HAP-1 (cell line): ENCODE measurements at regions of chr1 and their contacts with region 1.

Region 1: GRCh38 chr1:26602378-26602959 is 72.9 kb downstream of the RPS6KA1 start:
- DNase-seq: peak; percentile 69
- H3K4me3 ChIP-seq: no peak overlapping the region
- H3K4me1 ChIP-seq: peaks cover 7% of the 10 kb centered on the region; the same call in 1 of the 2 replicates
- H3K27me3 ChIP-seq: no peaks in the 10 kb centered on the region

Region 2: GRCh38 chr1:26429721-26430120 is 172.7 kb before region 1 on chr1:
- in situ Hi-C with region 1: no loop called
- DNase-seq: peak; percentile 80 to 90
- H3K4me3 ChIP-seq: no peak overlapping the region
- H3K4me1 ChIP-seq: peaks cover 22% of the 10 kb centered on the region
- H3K27me3 ChIP-seq: no peaks in the 10 kb centered on the region

Region 3: DNA sequence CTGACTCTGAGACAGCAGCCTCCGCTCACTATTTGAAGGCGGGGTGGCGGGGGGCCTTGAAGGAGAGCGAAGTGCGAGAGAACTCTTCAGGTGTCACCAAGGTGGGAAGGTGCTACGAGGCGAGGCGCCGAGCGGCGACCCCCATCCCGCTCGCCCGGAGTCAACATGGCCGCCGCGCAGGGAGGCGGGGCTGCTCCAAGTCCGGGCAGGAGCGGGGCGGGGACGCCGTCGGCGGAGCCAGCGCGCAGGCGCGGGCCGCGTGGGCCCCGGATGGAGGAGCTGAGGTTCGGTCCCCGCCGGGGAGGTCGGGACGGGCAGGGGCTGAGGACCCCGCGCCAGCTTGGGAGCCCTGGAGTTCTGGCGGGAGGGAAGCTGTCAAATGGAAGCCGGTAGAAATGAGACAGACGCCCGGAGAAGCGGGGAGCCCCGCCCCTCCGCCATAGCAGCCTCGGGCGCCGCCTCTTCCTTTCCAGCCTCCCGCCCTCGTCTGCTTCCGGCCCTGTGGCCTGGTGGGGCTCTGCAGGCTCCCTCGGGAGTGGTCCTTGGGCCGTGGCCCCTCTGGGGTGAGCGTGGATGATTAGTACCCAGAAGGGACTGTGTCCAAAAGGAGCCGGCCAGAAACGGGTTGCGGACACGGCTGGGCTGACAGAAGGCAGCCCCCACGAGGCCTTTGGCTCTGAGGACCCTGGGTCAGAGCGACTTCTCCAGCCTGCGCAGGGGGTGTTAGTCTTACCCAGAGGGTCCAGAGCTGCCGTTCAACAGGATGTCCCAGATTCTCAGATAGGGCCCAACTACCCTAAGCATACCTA is 185.4 kb after region 1 on chr1 and contains the start of gene PIGV:
- in situ Hi-C with region 1: loop called (anchors 5 kb)
- DNase-seq: peak; percentile 76 to 88
- H3K4me3 ChIP-seq: peak within 1 kb of the TSS; percentile 56
- H3K4me1 ChIP-seq: peaks cover 40% of the 10 kb centered on the region
- H3K27me3 ChIP-seq: no peaks in the 10 kb centered on the region

Region 4: GRCh38 chr1:26921540-26922430 is 319.3 kb after region 1 on chr1 and contains the start of gene NUDC:
- in situ Hi-C with region 1: no loop called
- DNase-seq: peak; percentile 97 to 98
- H3K4me3 ChIP-seq: peak within 1 kb of the TSS; percentile 90
- H3K4me1 ChIP-seq: peaks cover 15% of the 10 kb centered on the region
- H3K27me3 ChIP-seq: no peaks in the 10 kb centered on the region